Heart left ventricle (tissue), 16 donors: ENCODE measurements at regions of chr12 and their contacts with region 1.

Region 1: DNA sequence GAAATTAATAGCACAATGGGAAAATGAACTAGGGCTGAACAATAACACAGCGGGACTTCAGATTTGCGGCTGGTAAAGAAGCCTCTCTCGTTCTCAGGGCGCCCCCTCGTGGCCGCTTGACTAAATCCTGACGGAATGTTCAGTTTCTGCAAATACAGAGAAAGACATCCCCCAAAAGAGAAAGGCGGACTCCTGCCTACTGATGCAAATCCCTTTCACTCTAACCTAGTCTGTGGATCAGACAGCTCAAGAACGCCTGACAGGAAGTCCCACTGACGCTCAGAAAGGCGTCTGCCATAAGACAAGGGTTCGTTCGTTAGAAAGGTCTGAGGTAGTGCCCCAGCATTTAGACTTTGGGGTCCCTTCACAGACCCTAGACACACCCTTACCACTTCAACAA is 2.5 kb downstream of the NUAK1 start:
- DNase-seq: peak; percentile 87 to 92 (median 89)
- ATAC-seq: peak in 2 of 4 donors; percentile 10 to 47
- H3K4me3 ChIP-seq: peak overlapping the region; percentile 73 to 96 (median 90)
- H3K27ac ChIP-seq: peak overlapping the region; percentile 95 to 100 (median 97)
- H3K4me1 ChIP-seq: peaks cover 3 to 67% (median 50%) of the 10 kb centered on the region in 12 donors
- H3K27me3 ChIP-seq: peaks cover 0 to 33% (median 0%) of the 10 kb centered on the region in 9 donors
- CTCF ChIP-seq: peak; percentile 82 to 96 (median 89)
- POLR2A ChIP-seq: peak in 1 of 2 donors; percentile 36

Region 2: DNA sequence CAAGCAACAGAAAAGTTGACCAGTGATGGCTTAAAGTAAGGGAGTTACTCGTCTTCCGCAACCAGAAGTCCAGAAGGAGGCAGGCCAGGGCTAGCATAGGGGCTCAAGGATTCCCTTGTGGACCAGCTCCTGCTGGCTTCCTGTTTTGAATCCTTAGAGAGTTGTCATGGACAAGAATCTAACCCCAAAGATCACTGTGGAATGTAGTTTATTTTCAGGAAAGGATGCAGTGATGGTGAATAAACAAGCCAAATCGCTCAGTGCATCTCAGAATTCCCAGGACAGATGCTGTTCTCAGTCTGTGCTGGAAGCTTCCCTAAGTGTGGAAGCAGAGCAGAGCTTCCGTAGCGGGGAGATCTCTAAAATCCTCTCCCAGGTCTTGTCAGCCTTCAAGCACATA is 494.5 kb before region 1 on chr12:
- intact Hi-C with region 1: loop called in 1 of 10 experiments (anchors 10 kb)
- DNase-seq: peak in 4 of 5 donors; percentile 26 to 39 (median 34)
- ATAC-seq: peak in 3 of 4 donors; percentile 47 to 71 (median 53)
- H3K4me3 ChIP-seq: no peak overlapping the region
- H3K27ac ChIP-seq: no peak overlapping the region
- H3K4me1 ChIP-seq: peaks cover 0 to 9% (median 0%) of the 10 kb centered on the region in 12 donors
- H3K27me3 ChIP-seq: no peaks in the 10 kb centered on the region
- CTCF ChIP-seq: peak in 4 of 12 donors; percentile 15 to 43 (median 24)
- POLR2A ChIP-seq: no peak

Region 3: GRCh38 chr12:105775343-105775742 is 360.9 kb before region 1 on chr12:
- intact Hi-C with region 1: loop called in 1 of 10 experiments (anchors 5 kb)
- DNase-seq: no peak
- ATAC-seq: peak; percentile 20 to 58 (median 37)
- H3K4me3 ChIP-seq: no peak overlapping the region
- H3K27ac ChIP-seq: no peak overlapping the region
- H3K4me1 ChIP-seq: peaks cover 0 to 13% (median 0%) of the 10 kb centered on the region in 12 donors
- H3K27me3 ChIP-seq: no peaks in the 10 kb centered on the region
- CTCF ChIP-seq: peak in 6 of 12 donors; percentile 6 to 38 (median 27)
- POLR2A ChIP-seq: no peak

Region 4: GRCh38 chr12:105960319-105961083 is 175.8 kb before region 1 on chr12:
- intact Hi-C with region 1: loop called in 7 of 10 experiments (anchors 5 to 10 kb)
- DNase-seq: no peak
- ATAC-seq: peak in 1 of 4 donors; percentile 52
- H3K4me3 ChIP-seq: no peak overlapping the region
- H3K27ac ChIP-seq: peak overlapping the region in 5 of 12 donors; percentile 2 to 19 (median 10)
- H3K4me1 ChIP-seq: peaks cover 0 to 42% (median 15%) of the 10 kb centered on the region in 12 donors
- H3K27me3 ChIP-seq: no peaks in the 10 kb centered on the region
- CTCF ChIP-seq: no peak
- POLR2A ChIP-seq: no peak

Region 5: DNA sequence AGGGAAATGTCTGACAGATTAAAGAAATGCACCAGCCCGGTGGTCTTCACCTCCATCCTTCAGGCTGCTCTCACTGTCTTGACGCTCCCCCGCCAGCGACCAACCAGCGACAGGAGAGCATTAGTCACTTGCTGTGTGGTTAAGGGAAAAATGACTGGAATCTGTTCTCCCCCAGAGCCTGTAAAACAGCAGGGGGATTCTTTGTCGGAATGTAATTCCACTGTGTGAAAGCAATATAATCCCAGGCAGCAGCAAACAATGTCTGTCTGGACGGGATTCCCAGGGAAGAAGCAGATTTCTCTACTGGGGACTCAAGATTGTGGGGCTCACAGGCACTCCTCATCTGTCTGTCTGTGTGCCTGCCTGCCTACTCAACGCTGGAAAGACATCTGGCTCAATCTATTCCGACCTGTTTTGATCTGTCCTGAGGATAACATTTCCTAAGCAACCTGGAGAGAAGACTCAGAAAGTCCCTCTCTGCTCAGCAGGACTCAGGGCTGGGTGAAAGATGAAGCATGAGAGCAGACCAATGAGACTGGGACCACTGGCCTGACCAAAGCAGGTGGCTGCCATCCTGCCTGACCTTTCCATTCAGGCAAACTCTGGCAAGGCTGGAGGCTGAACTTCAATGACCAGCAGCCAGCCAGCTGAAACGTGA is 52.1 kb before region 1 on chr12:
- intact Hi-C with region 1: loop called in 4 of 10 experiments (anchors 5 to 10 kb)
- DNase-seq: no peak
- ATAC-seq: no peak
- H3K4me3 ChIP-seq: no peak overlapping the region
- H3K27ac ChIP-seq: peak overlapping the region in 6 of 12 donors; percentile 12 to 68 (median 35)
- H3K4me1 ChIP-seq: peaks cover 7 to 76% (median 53%) of the 10 kb centered on the region in 12 donors
- H3K27me3 ChIP-seq: no peaks in the 10 kb centered on the region
- CTCF ChIP-seq: no peak
- POLR2A ChIP-seq: no peak

Region 6: DNA sequence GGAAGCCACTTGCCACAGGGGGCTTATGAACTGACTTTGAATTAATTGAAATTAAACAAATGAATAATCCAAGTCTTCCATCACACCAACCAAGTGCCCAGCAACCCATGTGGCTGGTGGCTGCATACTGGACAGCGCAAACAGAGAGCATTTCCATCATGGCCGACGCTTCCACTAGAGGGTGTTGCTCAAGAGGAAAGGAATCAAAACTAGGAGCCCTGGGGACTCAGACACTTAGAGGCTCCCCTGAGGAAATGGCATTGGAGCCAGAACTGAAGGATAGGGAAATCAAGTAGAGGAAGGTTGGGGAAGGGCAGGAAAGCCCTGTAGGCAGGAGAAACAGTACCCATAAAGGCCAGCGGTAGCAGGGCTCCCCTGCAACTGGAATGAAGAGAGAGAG is 53.1 kb after region 1 on chr12:
- intact Hi-C with region 1: no loop called
- DNase-seq: no peak
- ATAC-seq: no peak
- H3K4me3 ChIP-seq: no peak overlapping the region
- H3K27ac ChIP-seq: no peak overlapping the region
- H3K4me1 ChIP-seq: peaks cover 0 to 7% (median 0%) of the 10 kb centered on the region in 12 donors
- H3K27me3 ChIP-seq: no peaks in the 10 kb centered on the region
- CTCF ChIP-seq: no peak
- POLR2A ChIP-seq: no peak

Region 7: DNA sequence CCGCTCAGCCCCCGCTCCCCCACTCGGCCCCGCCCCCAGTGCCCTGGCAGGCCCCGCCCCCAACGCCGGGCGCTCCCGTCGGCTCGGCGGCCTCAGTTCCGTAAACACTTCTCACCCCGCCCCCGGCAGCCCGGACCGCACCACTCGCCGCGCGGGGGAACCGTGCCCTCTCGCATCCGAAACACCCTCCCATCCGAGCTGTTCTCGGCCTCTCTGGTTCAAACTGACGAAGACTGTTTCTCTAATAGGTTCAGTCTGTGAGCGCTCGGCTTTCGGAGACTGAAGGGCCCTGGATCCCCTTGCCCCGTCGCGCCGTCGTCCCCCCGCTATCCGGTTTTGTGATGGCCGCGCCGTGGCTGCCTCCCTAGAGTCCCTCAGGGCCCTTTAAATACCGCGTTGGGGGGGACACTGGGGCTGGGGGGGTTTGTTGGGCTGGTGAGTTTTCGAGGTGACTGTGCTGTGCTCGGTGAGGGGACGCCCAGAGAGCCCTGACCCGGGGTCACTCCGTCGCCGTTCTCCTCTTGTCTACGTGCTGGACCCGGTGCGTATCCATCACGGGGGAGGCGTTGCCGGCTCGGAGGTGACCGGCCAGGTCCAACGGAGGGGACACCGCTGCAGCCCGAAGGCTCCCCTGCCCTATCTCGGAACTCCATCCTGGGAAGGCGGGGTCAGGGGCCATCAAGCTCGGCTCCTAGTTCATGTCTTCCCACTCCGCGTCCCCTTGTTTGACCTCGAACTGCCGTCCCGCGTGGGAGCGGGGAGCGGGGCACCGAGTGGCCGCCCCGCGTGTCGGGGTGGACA is 166.3 kb after region 1 on chr12 and contains the start of gene TCP11L2:
- intact Hi-C with region 1: loop called in 2 of 10 experiments (anchors 10 kb)
- DNase-seq: peak; percentile 89 to 94 (median 92)
- ATAC-seq: peak; percentile 66 to 85 (median 80)
- H3K4me3 ChIP-seq: peak within 1 kb of the TSS; percentile 80 to 97 (median 94)
- H3K27ac ChIP-seq: peak within 1 kb of the TSS; percentile 92 to 100 (median 98)
- H3K4me1 ChIP-seq: peaks cover 8 to 72% (median 63%) of the 10 kb centered on the region in 12 donors
- H3K27me3 ChIP-seq: no peaks in the 10 kb centered on the region
- CTCF ChIP-seq: no peak
- POLR2A ChIP-seq: peak in 1 of 2 donors; percentile 82
- total RNA-seq, gene TCP11L2: 60.8 to 147 (median 113) TPM